HCT116 (cell line): ENCODE measurements at regions of chr3 and their contacts with region 1.

Region 1: DNA sequence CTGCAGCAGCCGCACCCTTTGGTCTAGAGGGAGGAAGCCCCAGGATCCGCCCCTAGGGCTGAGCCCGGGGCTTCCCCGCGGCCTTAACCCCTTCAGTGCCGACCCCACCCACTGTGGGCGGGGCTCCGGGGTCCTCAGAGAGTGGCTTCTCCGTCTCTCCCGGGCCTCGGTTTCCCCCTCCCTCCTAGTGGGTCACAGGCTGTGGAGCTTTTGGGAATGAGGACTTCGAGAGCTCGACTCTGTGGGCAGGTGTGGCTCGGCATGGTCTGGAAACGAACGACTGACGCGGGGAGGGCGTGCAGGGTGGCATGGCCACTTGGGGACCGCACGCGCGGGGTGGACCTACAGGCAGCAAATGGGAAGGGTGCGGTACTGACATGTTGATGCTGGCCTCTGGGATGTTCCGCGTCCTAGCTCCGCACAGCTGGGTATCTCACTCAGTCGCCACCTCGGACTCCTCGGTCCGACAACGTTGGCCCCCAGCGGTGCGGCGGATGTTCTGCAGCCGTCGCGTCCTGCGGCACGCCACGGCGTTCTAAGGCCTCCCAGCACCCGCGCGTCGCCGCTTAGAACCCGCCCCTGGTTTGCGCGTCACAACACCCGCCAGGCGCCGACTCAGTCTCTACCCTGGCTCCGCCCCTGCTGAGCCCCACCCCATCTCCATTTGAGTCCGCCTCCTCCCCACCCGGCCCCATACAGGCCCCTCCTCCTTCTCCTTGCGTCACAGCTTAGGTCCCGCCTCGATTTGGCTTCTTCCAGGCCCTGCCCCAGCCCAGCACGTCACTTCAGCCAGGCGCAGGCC is at the starts of genes HYAL3 and NAA80:
- DNase-seq: peak; percentile 99
- ATAC-seq: peak; percentile 83
- H3K4me3 ChIP-seq: peak within 1 kb of the TSS; percentile 55 to 92
- H3K27ac ChIP-seq: peak within 1 kb of the TSS; percentile 73
- H3K4me1 ChIP-seq: peaks cover 21 to 47% of the 10 kb centered on the region in 2 experiments
- H3K27me3 ChIP-seq: no peaks in the 10 kb centered on the region
- CTCF ChIP-seq: peak in 2 of 3 experiments; percentile 11 to 30; a peak in 3 of 6 replicates
- POLR2A ChIP-seq: peak; percentile 72
- RAD21 ChIP-seq: no peak
- total RNA-seq, gene HYAL3: 10.3 TPM
- total RNA-seq, gene NAA80: 21.3 TPM

Region 2: GRCh38 chr3:50321336-50322114 is 22.5 kb after region 1 on chr3:
- CTCF ChIA-PET with region 1: interaction called, 14 read pairs
- POLR2A ChIA-PET with region 1: interaction called, 6 read pairs
- RAD21 ChIA-PET with region 1: interaction called, 3 to 5 read pairs
- intact Hi-C with region 1: loop called (anchors 1 kb)
- DNase-seq: peak; percentile 84
- ATAC-seq: peak; percentile 66
- H3K4me3 ChIP-seq: peak overlapping the region; percentile 64 to 92
- H3K27ac ChIP-seq: peak overlapping the region; percentile 93
- H3K4me1 ChIP-seq: peaks cover 49 to 76% of the 10 kb centered on the region in 2 experiments
- H3K27me3 ChIP-seq: no peaks in the 10 kb centered on the region
- CTCF ChIP-seq: peak in 2 of 3 experiments; percentile 70 to 71; a peak in 4 of 6 replicates
- POLR2A ChIP-seq: peak; percentile 79
- RAD21 ChIP-seq: no peak

Region 3: GRCh38 chr3:50327943-50328691 is 29.1 kb after region 1 on chr3 and contains the start of gene TUSC2:
- CTCF ChIA-PET with region 1: interaction called, 14 read pairs
- POLR2A ChIA-PET with region 1: interaction called, 12 read pairs
- RAD21 ChIA-PET with region 1: interaction called, 3 to 4 read pairs
- intact Hi-C with region 1: loop called (anchors 1 kb)
- DNase-seq: peak; percentile 93
- ATAC-seq: peak; percentile 82
- H3K4me3 ChIP-seq: peak within 1 kb of the TSS; percentile 87 to 98
- H3K27ac ChIP-seq: peak within 1 kb of the TSS; percentile 61
- H3K4me1 ChIP-seq: peaks cover 11 to 28% of the 10 kb centered on the region in 2 experiments
- H3K27me3 ChIP-seq: no peaks in the 10 kb centered on the region
- CTCF ChIP-seq: no peak
- POLR2A ChIP-seq: no peak
- RAD21 ChIP-seq: no peak
- total RNA-seq, gene TUSC2: 34.0 TPM